ENCODE measurements at regions of chr4 and their contacts with region 1.

Region 1: GRCh38 chr4:1011022-1011694 is at the start of gene FGFRL1:
- DNase-seq: peak; percentile 97
- ATAC-seq: peak; percentile 59
- H3K4me3 Mint-ChIP-seq: peak within 1 kb of the TSS; percentile 75
- H3K27ac Mint-ChIP-seq: peak within 1 kb of the TSS; percentile 80
- H3K4me1 Mint-ChIP-seq: peaks cover 9% of the 10 kb centered on the region
- H3K27me3 Mint-ChIP-seq: peaks cover 26% of the 10 kb centered on the region
- total RNA-seq, gene FGFRL1: 17.6 to 23.5 TPM

Region 2: GRCh38 chr4:742742-743311 is 268.3 kb before region 1 on chr4:
- CTCF ChIA-PET with region 1: interaction called, 3 read pairs
- POLR2A ChIA-PET with region 1: no interaction called
- intact Hi-C with region 1: loop called in 1 of 2 experiments (anchors 2 kb)
- DNase-seq: peak; percentile 89
- ATAC-seq: peak; percentile 95
- H3K4me3 Mint-ChIP-seq: no peak overlapping the region
- H3K27ac Mint-ChIP-seq: no peak overlapping the region
- H3K4me1 Mint-ChIP-seq: no peaks in the 10 kb centered on the region
- H3K27me3 Mint-ChIP-seq: no peaks in the 10 kb centered on the region

Region 3: GRCh38 chr4:973431-974397 is 37.4 kb before region 1 on chr4 and contains the start of gene DGKQ:
- CTCF ChIA-PET with region 1: no interaction called
- POLR2A ChIA-PET with region 1: no interaction called
- intact Hi-C with region 1: loop called (anchors 1 kb)
- DNase-seq: peak; percentile 93
- ATAC-seq: peak; percentile 96
- H3K4me3 Mint-ChIP-seq: peak within 1 kb of the TSS; percentile 58
- H3K27ac Mint-ChIP-seq: no peak within 1 kb of the TSS
- H3K4me1 Mint-ChIP-seq: peaks cover 6% of the 10 kb centered on the region
- H3K27me3 Mint-ChIP-seq: no peaks in the 10 kb centered on the region
- total RNA-seq, gene DGKQ: 9.3 to 11.3 TPM

Region 4: GRCh38 chr4:1192091-1192492 is 180.9 kb after region 1 on chr4:
- CTCF ChIA-PET with region 1: no interaction called
- POLR2A ChIA-PET with region 1: no interaction called
- intact Hi-C with region 1: no loop called
- DNase-seq: peak; percentile 1
- ATAC-seq: no peak
- H3K4me3 Mint-ChIP-seq: no peak overlapping the region
- H3K27ac Mint-ChIP-seq: no peak overlapping the region
- H3K4me1 Mint-ChIP-seq: peaks cover 2% of the 10 kb centered on the region
- H3K27me3 Mint-ChIP-seq: no peaks in the 10 kb centered on the region

Region 5: GRCh38 chr4:1249148-1249730 is 238.1 kb after region 1 on chr4:
- CTCF ChIA-PET with region 1: no interaction called
- POLR2A ChIA-PET with region 1: no interaction called
- intact Hi-C with region 1: loop called in 1 of 2 experiments (anchors 1 kb)
- DNase-seq: peak; percentile 90
- ATAC-seq: peak; percentile 63
- H3K4me3 Mint-ChIP-seq: peak overlapping the region; percentile 80
- H3K27ac Mint-ChIP-seq: peak overlapping the region; percentile 94
- H3K4me1 Mint-ChIP-seq: peaks cover 74% of the 10 kb centered on the region
- H3K27me3 Mint-ChIP-seq: no peaks in the 10 kb centered on the region

Region 6: DNA sequence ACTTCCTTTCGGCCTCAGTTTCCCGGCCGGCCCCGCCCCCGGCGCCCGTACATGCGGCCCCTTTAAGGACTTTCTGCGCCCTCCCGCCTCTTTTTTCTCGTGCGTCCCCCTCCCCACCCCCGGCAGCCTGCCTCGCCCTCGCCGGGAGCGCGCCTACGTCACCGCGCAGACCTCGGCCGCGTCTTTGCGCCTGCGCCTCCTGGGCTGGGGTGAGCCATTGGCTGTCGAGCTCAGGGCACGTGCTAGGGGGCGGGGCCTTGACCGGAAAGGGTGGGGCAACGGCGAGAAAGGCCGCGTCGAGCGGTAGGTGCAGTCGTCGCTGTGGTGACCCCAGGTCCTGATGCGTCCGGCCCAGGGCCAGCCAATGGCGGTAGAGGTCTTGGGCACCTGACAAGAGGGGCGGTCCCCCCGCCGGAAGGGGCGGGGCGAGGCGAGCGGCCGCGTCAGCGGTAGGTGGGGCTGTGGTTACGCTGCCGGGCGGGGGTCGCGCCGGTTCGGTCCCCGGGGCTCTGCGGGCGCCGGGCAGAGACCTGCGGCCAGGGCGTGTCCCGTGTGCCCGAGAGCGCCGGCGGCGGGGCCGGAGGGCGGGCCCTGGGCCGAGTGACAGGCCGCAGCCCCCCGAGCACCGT is 335.7 kb after region 1 on chr4 and contains the start of gene UVSSA:
- CTCF ChIA-PET with region 1: interaction called, 3 read pairs
- POLR2A ChIA-PET with region 1: no interaction called
- intact Hi-C with region 1: loop called in 1 of 2 experiments (anchors 1 kb)
- DNase-seq: peak; percentile 100
- ATAC-seq: peak; percentile 95
- H3K4me3 Mint-ChIP-seq: peak within 1 kb of the TSS; percentile 86
- H3K27ac Mint-ChIP-seq: peak within 1 kb of the TSS; percentile 87
- H3K4me1 Mint-ChIP-seq: peaks cover 47% of the 10 kb centered on the region
- H3K27me3 Mint-ChIP-seq: no peaks in the 10 kb centered on the region
- total RNA-seq, gene UVSSA: 14.8 to 18.1 TPM